PC-9 (cell line): ENCODE measurements at regions of chr18 and their contacts with region 1.

Region 1: DNA sequence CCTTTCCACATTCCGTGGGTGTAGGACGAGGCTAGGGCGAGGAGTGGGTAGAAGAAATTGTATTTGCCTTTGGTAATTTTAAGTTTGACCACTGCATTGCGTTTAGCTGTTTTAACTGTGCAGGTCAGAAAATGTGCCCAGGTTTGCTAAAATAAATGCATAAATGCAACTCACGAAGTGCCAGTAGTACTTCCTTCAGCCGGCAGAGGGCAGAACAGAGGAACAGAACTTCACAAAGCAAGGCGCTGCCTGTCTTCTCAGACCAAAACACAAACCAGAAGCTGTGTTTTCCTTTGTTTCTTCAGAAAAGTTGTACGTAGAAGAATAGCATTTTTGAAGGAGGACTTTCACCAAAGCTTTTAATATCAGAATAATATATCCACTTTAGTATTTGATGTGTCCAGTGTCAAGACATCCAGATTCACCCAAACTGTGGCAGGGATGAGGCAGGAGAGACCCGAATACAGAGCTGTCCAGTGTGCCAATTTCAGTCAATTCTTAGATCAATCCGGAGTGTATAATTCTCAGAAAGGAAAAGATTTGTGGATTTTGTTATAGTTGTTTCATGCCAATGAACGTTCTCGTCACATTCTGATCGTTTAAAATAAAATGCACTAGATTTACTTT is 348.6 kb downstream of the DLGAP1 start:
- DNase-seq: peak in 1 of 2 experiments; percentile 61
- H3K4me3 ChIP-seq: no peak overlapping the region
- H3K27ac ChIP-seq: no peak overlapping the region
- H3K4me1 ChIP-seq: no peaks in the 10 kb centered on the region
- H3K27me3 ChIP-seq: no peaks in the 10 kb centered on the region
- CTCF ChIP-seq: peak; percentile 89

Region 2: DNA sequence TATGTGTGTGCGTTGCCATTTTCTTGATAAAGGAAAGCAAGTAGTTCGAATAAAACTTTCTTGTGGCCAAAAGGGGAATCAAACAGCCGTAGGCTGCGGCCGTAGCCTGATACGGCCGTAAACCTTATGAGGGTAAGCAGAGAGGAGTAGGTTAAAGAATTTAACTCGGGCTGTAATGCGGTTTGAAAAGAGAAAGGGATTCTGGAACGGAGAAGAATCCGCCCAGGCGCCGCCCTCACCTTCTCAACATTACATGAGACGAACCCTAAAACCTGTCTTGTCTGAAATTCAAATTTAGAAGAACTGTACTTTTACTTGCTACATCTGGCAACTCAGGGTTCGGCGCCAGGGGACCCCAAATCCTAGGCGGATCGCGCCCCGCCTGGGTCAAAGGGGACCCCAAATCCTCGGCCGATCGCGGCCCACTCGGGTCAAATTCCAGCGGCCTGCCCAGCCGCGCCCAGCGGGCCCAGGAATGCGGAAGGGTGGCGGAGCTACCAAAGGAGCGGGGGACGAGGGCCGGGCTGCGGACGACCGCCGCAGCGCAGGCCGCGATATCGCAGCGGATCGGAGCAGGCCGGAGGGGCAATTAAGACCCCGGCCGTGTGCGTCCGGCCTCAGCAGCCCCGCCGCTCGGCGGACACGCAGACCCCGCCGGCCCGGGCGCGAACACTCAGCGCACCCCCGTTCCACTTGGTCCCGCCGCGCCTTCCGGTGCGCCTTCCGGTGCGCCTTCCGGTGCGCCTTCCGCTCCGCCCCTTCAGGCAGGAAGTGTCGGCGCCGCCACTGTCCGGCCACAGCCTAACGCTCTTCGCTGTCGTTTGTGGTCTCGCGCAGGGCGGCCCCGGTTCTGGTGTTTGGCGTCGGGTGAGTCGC is 844.9 kb before region 1 on chr18 and contains the start of gene MYL12B:
- CTCF ChIA-PET with region 1: no interaction called
- POLR2A ChIA-PET with region 1: no interaction called
- intact Hi-C with region 1: no loop called
- DNase-seq: peak; percentile 77 to 89
- H3K4me3 ChIP-seq: peak within 1 kb of the TSS; percentile 100
- H3K27ac ChIP-seq: peak within 1 kb of the TSS; percentile 93
- H3K4me1 ChIP-seq: peaks cover 39% of the 10 kb centered on the region
- H3K27me3 ChIP-seq: no peaks in the 10 kb centered on the region
- CTCF ChIP-seq: no peak
- total RNA-seq, gene MYL12B: 381 and 383 TPM in 2 replicates

Region 3: DNA sequence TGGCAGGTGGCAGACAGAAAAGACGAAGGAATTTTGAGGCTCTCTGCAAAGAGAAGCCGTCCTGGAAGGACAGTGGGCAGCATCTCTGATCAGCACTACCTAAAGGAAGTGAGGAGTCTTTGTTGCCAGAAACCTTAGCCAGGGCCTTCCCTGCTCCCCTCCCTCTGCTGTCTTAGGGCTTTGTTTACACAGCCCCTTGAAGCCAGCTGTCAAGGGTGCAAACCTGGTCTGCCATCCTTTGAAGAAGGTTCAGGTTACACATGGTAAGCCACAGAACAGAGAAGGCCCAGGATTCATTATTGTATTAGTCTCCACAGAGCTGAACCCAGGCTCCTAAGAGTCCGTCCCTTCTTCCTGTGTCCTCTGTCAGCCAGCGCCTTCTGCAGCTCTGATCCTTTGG is 299.9 kb before region 1 on chr18:
- CTCF ChIA-PET with region 1: no interaction called
- POLR2A ChIA-PET with region 1: no interaction called
- intact Hi-C with region 1: no loop called
- DNase-seq: no peak
- H3K4me3 ChIP-seq: no peak overlapping the region
- H3K27ac ChIP-seq: no peak overlapping the region
- H3K4me1 ChIP-seq: no peaks in the 10 kb centered on the region
- H3K27me3 ChIP-seq: no peaks in the 10 kb centered on the region
- CTCF ChIP-seq: no peak

Region 4: DNA sequence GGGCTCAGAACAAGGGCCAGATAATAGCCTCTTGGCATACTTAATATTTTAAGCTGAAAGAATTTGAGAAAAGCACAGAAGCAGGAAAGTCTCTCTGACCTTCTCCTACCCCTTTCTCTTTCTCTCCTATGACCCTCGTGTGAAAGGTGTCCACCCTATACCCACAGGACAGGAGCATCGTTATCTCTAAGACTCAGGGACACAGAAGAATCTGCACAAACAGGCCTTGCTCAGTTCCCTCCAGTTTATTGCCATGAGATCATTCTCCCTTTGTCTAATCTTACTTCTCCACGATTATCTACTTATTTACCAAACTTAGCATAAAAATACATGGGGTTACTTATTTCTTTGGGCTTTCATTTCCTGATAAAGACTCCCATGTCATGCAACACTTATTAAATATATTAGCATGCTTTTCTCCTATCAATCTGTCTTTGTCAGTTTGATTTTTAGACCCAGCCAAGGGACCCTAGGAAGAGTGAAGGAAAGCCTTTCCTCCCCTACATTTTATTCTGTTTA is 22.1 kb before region 1 on chr18:
- CTCF ChIA-PET with region 1: no interaction called
- POLR2A ChIA-PET with region 1: no interaction called
- intact Hi-C with region 1: no loop called
- DNase-seq: no peak
- H3K4me3 ChIP-seq: no peak overlapping the region
- H3K27ac ChIP-seq: no peak overlapping the region
- H3K4me1 ChIP-seq: no peaks in the 10 kb centered on the region
- H3K27me3 ChIP-seq: peaks cover 10% of the 10 kb centered on the region; the same call in 1 of the 2 replicates
- CTCF ChIP-seq: no peak

Region 5: DNA sequence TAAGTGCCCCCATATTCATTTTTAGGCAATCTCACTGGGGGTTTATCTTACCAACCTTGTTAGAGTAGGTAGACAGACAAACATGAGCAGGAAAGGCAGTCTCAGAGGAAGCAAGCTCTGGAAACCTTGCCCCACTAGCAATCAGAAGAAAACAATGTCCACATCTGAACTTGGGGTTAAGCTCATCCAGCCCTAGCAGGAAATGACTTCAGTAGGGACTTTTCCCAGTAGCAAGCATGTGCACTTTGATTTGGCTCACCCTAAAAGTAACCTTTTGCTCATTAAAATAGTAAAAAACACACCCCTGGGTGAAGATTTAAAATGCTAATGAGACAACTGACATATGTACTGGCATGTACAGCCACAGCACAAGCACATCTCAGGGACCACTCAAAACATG is 915.0 kb after region 1 on chr18:
- CTCF ChIA-PET with region 1: no interaction called
- POLR2A ChIA-PET with region 1: no interaction called
- intact Hi-C with region 1: loop called (anchors 1 kb)
- DNase-seq: no peak
- H3K4me3 ChIP-seq: no peak overlapping the region
- H3K27ac ChIP-seq: no peak overlapping the region
- H3K4me1 ChIP-seq: no peaks in the 10 kb centered on the region
- H3K27me3 ChIP-seq: no peaks in the 10 kb centered on the region
- CTCF ChIP-seq: no peak

Region 6: GRCh38 chr18:5057386-5058348 is 951.1 kb after region 1 on chr18:
- CTCF ChIA-PET with region 1: no interaction called
- POLR2A ChIA-PET with region 1: no interaction called
- intact Hi-C with region 1: loop called (anchors 1 kb)
- DNase-seq: peak in 1 of 2 experiments; percentile 50
- H3K4me3 ChIP-seq: no peak overlapping the region
- H3K27ac ChIP-seq: no peak overlapping the region
- H3K4me1 ChIP-seq: no peaks in the 10 kb centered on the region
- H3K27me3 ChIP-seq: peaks cover 22% of the 10 kb centered on the region
- CTCF ChIP-seq: peak; percentile 86